ENCODE measurements at regions of chr12 and their contacts with region 1.

Region 1: DNA sequence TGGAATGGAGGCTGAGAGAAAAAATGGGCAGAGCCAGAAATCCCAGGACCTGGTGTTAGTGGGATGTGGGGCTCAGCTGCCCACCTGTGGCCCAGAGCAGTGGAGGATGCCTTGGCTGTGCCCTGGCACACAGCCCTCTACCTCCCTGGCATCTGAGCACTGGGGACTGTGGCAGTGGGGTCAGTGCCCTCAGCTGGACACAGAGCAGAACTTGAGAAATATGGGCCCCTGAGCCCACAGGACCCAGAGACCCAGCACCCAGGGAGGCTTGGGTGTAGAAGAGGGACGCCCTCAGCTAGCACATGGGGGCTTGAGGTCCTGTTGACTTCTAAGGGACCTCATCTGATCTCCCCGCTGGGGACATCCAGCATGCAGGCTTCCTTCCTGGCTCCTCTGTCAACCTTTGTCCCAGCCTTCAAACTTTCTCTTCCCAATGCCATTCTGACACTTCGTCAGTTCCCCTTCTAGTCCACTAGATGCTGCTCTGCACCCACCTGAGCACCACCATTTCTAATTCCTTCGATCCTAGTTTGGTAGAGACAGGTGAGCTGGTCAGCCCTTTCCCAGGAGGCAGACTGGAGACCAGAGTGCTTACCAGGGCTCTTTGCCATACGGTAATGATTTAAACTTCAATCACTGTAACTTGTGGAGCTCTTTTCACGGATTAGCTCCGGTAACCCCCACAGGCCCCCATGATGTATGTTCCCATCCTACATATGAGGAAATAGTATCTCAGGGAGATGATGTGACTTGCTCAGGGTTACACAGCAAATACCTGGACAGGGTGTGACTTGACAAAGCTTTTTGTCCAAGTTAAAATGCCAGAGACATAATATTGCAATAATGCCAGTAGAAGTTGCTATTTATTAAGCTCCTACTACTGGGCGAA is 143.7 kb downstream of the ASCL4 start:
- DNase-seq: peak; percentile 32
- ATAC-seq: peak; percentile 91
- H3K4me3 ChIP-seq: no peak overlapping the region
- H3K27ac ChIP-seq: no peak overlapping the region
- H3K4me1 ChIP-seq: no peaks in the 10 kb centered on the region
- H3K27me3 ChIP-seq: peaks cover 26% of the 10 kb centered on the region
- CTCF ChIP-seq: peak; percentile 55 to 77 (median 77); a peak in 5 of 6 replicates
- POLR2A ChIP-seq: no peak
- RAD21 ChIP-seq: peak; percentile 74

Region 2: DNA sequence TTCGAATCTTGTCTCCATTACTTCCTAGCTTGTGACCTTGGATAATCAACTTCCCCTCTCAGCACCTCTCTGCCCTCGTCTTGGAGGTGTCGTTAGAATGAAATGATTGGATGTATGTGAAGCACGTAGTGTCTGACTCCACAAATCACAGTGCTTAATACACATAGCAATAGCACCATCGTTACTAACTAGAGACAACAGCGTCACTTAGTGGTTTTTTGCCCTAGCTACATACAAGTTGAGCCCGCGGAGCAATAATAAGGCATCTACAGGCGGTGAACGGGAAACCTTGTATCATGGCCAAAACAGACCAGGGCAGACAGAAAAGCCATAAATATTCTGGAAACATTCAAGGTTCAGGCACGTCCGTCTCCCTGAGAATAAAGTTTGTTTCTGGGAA is 11.3 kb after region 1 on chr12:
- CTCF ChIA-PET with region 1: interaction called, 11 read pairs
- POLR2A ChIA-PET with region 1: no interaction called
- RAD21 ChIA-PET with region 1: interaction called in 1 of 2 experiments, 3 read pairs
- intact Hi-C with region 1: no loop called
- DNase-seq: peak; percentile 78
- ATAC-seq: peak; percentile 97
- H3K4me3 ChIP-seq: no peak overlapping the region
- H3K27ac ChIP-seq: no peak overlapping the region
- H3K4me1 ChIP-seq: peaks cover 0 to 3% of the 10 kb centered on the region in 2 experiments; a peak in 1 of 4 replicates
- H3K27me3 ChIP-seq: peaks cover 58% of the 10 kb centered on the region
- CTCF ChIP-seq: peak; percentile 60 to 68 (median 61)
- POLR2A ChIP-seq: no peak
- RAD21 ChIP-seq: peak; percentile 70

Region 3: GRCh38 chr12:107967170-107967569 is 49.0 kb after region 1 on chr12:
- CTCF ChIA-PET with region 1: no interaction called
- POLR2A ChIA-PET with region 1: no interaction called
- RAD21 ChIA-PET with region 1: no interaction called
- intact Hi-C with region 1: no loop called
- DNase-seq: no peak
- ATAC-seq: no peak
- H3K4me3 ChIP-seq: no peak overlapping the region
- H3K27ac ChIP-seq: no peak overlapping the region
- H3K4me1 ChIP-seq: no peaks in the 10 kb centered on the region
- H3K27me3 ChIP-seq: peaks cover 44% of the 10 kb centered on the region
- CTCF ChIP-seq: no peak
- POLR2A ChIP-seq: no peak
- RAD21 ChIP-seq: no peak

Region 4: DNA sequence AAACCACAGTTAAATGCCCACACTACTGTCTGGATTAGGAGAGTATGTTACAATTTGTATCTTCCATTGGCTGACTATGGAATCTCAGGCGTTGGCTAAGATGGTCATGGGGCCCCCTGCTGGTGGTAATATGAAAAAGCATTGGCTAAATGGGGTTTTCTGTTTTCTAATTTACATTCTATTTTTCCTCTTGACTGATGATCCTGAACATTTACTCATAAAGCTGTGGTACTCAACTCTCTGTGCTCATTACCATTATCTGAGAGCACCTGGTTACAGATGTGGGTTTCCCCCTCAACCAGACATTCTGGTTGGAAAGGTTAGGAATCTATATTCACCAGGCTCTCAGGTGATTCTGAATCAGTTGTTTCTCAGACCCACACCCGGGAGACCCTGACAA is 275.8 kb after region 1 on chr12:
- CTCF ChIA-PET with region 1: interaction called, 4 read pairs
- POLR2A ChIA-PET with region 1: no interaction called
- RAD21 ChIA-PET with region 1: no interaction called
- intact Hi-C with region 1: loop called (anchors 1 kb)
- DNase-seq: peak; percentile 2
- ATAC-seq: no peak
- H3K4me3 ChIP-seq: no peak overlapping the region
- H3K27ac ChIP-seq: no peak overlapping the region
- H3K4me1 ChIP-seq: no peaks in the 10 kb centered on the region
- H3K27me3 ChIP-seq: peaks cover 26% of the 10 kb centered on the region
- CTCF ChIP-seq: peak; percentile 59 to 84 (median 72); a peak in 5 of 6 replicates
- POLR2A ChIP-seq: no peak
- RAD21 ChIP-seq: peak; percentile 62

Region 5: DNA sequence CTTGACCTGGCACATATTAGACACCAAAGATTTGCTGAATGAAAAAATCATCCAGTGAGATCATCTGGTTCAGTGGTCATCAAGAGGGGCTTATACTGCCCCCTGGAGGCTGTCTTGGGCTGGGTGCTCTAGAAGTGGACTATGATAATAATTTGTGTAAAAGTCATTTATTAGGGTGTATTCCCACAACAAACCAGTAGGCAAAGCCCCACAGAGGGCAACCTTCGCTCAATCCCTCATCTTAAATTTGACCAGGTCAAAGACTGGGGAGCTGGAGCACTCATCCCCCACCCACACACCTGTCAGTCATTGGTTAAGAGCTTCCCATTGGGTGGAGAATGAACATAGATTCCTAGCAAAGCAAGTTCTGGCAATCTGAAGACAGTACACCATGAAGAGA is 576.9 kb after region 1 on chr12:
- CTCF ChIA-PET with region 1: interaction called, 3 read pairs
- POLR2A ChIA-PET with region 1: no interaction called
- RAD21 ChIA-PET with region 1: no interaction called
- intact Hi-C with region 1: loop called (anchors 5 kb)
- DNase-seq: peak; percentile 51
- ATAC-seq: peak; percentile 91
- H3K4me3 ChIP-seq: no peak overlapping the region
- H3K27ac ChIP-seq: no peak overlapping the region
- H3K4me1 ChIP-seq: no peaks in the 10 kb centered on the region
- H3K27me3 ChIP-seq: peaks cover 54% of the 10 kb centered on the region
- CTCF ChIP-seq: peak; percentile 67 to 95 (median 91); a peak in 5 of 6 replicates
- POLR2A ChIP-seq: no peak
- RAD21 ChIP-seq: peak; percentile 69

Region 6: DNA sequence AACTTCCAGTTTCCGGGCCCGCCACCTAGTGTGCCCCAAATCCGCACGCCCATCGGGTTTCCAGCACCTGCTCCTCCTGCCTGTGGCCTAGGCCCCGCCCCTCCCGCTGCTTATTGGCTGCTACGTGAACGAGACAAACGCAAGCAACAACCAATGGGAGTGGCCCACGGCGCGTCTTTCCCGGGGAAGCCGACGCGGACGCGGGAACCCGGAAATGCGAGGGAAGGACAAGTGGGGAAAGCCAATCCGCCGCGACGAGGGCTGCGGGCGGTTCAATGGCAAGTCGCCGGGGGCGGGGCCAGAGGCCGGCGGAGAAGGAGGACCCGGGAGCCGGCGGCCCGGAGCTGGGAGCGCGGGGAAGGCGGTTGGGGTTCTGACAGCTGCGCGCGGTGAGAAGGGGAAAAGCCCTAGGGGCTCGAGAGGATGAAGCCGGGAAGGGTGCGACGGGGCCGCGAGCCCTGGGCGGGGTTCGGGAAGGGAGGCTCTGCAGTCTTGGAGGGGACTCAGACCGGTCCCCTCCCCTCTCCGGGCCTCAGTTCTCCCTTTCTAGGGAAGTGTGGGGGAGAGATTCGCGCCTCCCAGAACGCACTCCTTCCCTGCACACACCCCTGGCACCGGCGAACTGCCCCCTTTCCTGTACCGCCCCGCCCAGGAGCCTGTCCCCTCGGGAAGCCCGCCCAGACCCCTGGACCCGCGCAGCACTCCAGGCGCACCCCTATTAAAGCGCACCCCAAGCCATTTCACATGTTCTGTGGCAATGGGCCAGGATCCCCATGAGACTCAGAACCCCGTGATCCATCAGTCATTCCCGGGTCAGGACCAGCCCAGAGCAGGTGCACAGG is 597.0 kb after region 1 on chr12 and contains the start of gene FICD:
- CTCF ChIA-PET with region 1: interaction called, 13 read pairs
- POLR2A ChIA-PET with region 1: no interaction called
- RAD21 ChIA-PET with region 1: no interaction called
- intact Hi-C with region 1: loop called (anchors 5 kb)
- DNase-seq: peak; percentile 96
- ATAC-seq: peak; percentile 90
- H3K4me3 ChIP-seq: peak within 1 kb of the TSS; percentile 89 to 94
- H3K27ac ChIP-seq: peak within 1 kb of the TSS; percentile 42; the same call in 1 of the 2 replicates
- H3K4me1 ChIP-seq: peaks cover 3 to 19% of the 10 kb centered on the region in 2 experiments; a peak in 2 of 4 replicates
- H3K27me3 ChIP-seq: no peaks in the 10 kb centered on the region
- CTCF ChIP-seq: no peak
- POLR2A ChIP-seq: no peak
- RAD21 ChIP-seq: no peak
- total RNA-seq, gene FICD: 5.1 TPM

Measured in HCT116 (cell line).